CD4-positive, alpha-beta T cell (primary cell): ENCODE measurements at regions of chr1 and their contacts with region 1.

Region 1: DNA sequence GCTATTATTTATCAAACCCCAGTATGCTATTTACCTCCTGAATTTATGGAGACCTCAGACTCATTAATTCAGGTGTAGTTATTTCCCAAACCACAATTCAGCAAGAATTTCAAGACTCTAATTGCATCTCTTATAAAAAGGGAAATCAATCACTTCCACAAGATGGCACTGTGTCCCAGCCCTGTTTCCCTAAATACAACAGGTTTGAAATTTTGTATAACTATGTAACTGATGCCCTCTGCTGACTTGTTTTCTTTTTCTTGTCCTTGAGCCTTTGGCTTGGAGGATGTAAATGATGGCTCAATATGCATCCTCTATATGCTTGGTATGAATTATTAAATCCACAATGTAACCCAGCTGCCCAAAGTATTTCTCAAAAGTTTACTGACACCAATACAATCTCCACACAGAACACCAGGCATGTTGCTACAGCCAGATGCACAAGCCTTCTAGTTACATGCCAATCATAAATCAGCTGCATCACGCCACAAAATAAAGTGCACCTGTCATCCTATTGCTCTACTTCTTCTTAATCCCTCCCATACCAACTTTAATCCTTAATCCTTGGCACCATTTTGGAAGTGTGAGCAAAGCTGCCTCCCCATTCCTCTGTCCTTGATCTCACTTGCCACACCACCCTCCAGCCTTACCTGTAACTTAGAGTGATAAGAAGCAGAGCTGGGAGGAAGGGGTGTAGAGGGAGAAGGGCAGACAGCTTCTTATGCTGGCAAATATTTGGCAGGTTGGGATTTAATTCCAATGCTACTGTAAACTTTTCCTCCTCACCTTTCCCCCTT is 9.0 kb downstream of the C1orf105 start:
- DNase-seq: peak in 12 of 14 experiments; percentile 8 to 81 (median 34)
- ATAC-seq: peak; percentile 75
- H3K4me3 ChIP-seq: no peak overlapping the region
- H3K4me3 Mint-ChIP-seq: peak overlapping the region; percentile 64
- H3K27ac ChIP-seq: no peak overlapping the region
- H3K27ac Mint-ChIP-seq: peak overlapping the region; percentile 75
- H3K4me1 ChIP-seq: peaks cover 39% of the 10 kb centered on the region
- H3K4me1 Mint-ChIP-seq: peaks cover 39% of the 10 kb centered on the region
- H3K27me3 ChIP-seq: no peaks in the 10 kb centered on the region
- H3K27me3 Mint-ChIP-seq: no peaks in the 10 kb centered on the region
- CTCF ChIP-seq: peak; percentile 80

Region 2: DNA sequence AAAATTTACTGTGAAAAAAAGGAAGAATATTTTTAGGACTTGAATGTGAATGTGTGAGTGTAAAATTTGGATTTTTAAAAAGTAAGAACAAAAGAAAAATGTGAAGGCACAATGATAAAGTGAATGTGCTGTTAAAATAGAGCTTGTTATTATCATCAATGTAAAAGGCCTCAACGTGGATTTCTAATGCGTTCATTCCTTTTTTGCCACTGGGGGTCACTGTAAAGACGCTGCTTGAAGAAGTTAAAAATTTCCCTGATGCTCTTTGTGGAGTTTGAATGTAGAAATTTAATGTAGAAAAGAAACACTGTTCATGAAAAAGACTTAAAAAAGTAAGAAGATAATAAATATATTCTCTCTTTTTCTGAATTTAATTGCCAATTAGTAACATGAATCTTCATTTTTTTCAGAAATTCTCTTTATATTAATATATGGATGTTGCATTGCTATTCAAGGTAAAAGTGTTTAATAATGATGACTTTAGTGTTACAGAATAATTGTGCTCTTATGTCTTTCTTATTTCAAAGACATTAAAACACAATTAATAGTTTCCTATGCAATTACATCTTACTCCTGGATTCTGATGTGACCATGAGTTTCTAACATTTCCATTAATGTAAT is 426.7 kb before region 1 on chr1:
- CTCF ChIA-PET with region 1: interaction called, 3 read pairs
- POLR2A ChIA-PET with region 1: no interaction called
- intact Hi-C with region 1: loop called (anchors 1 to 5 kb)
- DNase-seq: peak in 8 of 14 experiments; percentile 3 to 65 (median 34)
- ATAC-seq: no peak
- H3K4me3 ChIP-seq: no peak overlapping the region
- H3K4me3 Mint-ChIP-seq: no peak overlapping the region
- H3K27ac ChIP-seq: no peak overlapping the region
- H3K27ac Mint-ChIP-seq: no peak overlapping the region
- H3K4me1 ChIP-seq: no peaks in the 10 kb centered on the region
- H3K4me1 Mint-ChIP-seq: no peaks in the 10 kb centered on the region
- H3K27me3 ChIP-seq: no peaks in the 10 kb centered on the region
- H3K27me3 Mint-ChIP-seq: peaks cover under 1% of the 10 kb centered on the region
- CTCF ChIP-seq: peak; percentile 71

Region 3: DNA sequence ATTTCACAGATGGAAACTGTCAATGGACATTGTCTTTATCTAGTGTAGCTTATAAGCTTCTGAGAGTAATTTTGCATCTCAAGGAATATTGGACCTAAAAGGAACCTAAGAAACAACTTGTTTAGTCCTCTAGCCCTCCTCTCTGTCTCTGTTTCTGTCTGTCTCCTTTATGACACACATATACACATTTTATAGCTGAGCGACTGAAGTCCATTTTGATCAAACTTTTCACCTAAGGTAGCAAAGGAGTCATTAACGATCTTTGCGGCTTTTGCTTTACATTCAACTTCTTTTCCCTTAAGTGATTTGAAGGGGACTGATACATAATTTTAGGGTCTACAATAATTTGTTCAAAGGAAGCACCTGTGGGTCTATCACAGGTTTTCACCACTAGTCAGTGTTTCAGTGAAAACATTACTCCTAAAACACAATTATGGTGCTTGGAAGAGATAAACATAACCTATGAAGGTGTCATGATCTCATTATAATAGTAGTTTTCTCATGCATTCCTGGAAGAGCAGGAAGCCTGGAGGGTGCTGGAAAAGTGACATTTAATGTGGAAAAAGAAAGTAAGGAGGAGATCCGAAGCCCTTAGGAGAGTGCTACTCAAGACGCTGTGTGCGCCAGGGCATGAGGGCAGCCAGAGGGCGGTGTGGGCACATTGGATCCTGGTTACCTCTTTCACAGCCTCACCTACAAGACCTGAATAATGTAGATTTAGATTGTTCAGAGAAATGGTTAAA is 339.6 kb before region 1 on chr1:
- CTCF ChIA-PET with region 1: no interaction called
- POLR2A ChIA-PET with region 1: no interaction called
- intact Hi-C with region 1: loop called in 1 of 2 experiments (anchors 2 kb)
- DNase-seq: peak; percentile 42 to 78 (median 50)
- ATAC-seq: peak; percentile 96
- H3K4me3 ChIP-seq: no peak overlapping the region
- H3K4me3 Mint-ChIP-seq: no peak overlapping the region
- H3K27ac ChIP-seq: no peak overlapping the region
- H3K27ac Mint-ChIP-seq: no peak overlapping the region
- H3K4me1 ChIP-seq: no peaks in the 10 kb centered on the region
- H3K4me1 Mint-ChIP-seq: no peaks in the 10 kb centered on the region
- H3K27me3 ChIP-seq: no peaks in the 10 kb centered on the region
- H3K27me3 Mint-ChIP-seq: no peaks in the 10 kb centered on the region
- CTCF ChIP-seq: peak; percentile 76

Region 4: DNA sequence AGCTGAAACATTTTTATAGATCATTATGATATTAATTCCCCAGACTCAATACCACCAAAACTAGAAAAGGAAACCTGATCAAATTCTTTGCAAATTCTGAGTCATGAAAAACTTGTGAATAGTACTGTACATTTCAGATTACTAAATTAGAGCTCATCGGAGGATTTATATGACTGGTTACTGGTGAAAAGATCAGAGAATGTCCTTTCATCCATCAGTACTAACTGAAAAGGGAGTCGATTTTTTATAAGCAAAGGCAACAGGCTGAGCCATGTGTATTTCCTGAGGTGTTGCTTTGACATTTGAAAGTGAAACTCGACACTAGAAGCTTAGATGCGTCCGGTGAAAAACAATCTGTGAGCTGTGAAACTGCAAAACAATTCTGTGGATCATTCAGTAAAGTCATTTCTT is 465.5 kb after region 1 on chr1:
- CTCF ChIA-PET with region 1: no interaction called
- POLR2A ChIA-PET with region 1: no interaction called
- intact Hi-C with region 1: no loop called
- DNase-seq: peak in 6 of 14 experiments; percentile 19 to 79 (median 48)
- ATAC-seq: peak; percentile 74
- H3K4me3 ChIP-seq: peak overlapping the region; percentile 39
- H3K4me3 Mint-ChIP-seq: peak overlapping the region; percentile 76
- H3K27ac ChIP-seq: peak overlapping the region; percentile 11 to 59
- H3K27ac Mint-ChIP-seq: peak overlapping the region; percentile 84
- H3K4me1 ChIP-seq: peaks cover 6% of the 10 kb centered on the region
- H3K4me1 Mint-ChIP-seq: peaks cover 39% of the 10 kb centered on the region
- H3K27me3 ChIP-seq: no peaks in the 10 kb centered on the region
- H3K27me3 Mint-ChIP-seq: no peaks in the 10 kb centered on the region
- CTCF ChIP-seq: no peak